PC-3 (cell line): ENCODE measurements at regions of chr6 and their contacts with region 1.

Region 1: GRCh38 chr6:42482174-42482573 is 30.4 kb upstream of the TRERF1 start:
- DNase-seq: no peak
- ATAC-seq: no peak
- H3K4me3 ChIP-seq: no peak overlapping the region
- H3K27ac ChIP-seq: no peak overlapping the region
- H3K4me1 ChIP-seq: no peaks in the 10 kb centered on the region
- H3K27me3 ChIP-seq: no peaks in the 10 kb centered on the region
- CTCF ChIP-seq: no peak

Region 2: GRCh38 chr6:42520786-42521607 is 38.8 kb after region 1 on chr6:
- CTCF ChIA-PET with region 1: no interaction called
- POLR2A ChIA-PET with region 1: no interaction called
- intact Hi-C with region 1: no loop called
- DNase-seq: peak; percentile 92
- ATAC-seq: peak; percentile 95
- H3K4me3 ChIP-seq: peak overlapping the region; percentile 11; the same call in 1 of the 2 replicates
- H3K27ac ChIP-seq: peak overlapping the region; percentile 96
- H3K4me1 ChIP-seq: peaks cover 23% of the 10 kb centered on the region
- H3K27me3 ChIP-seq: no peaks in the 10 kb centered on the region
- CTCF ChIP-seq: no peak

Region 3: DNA sequence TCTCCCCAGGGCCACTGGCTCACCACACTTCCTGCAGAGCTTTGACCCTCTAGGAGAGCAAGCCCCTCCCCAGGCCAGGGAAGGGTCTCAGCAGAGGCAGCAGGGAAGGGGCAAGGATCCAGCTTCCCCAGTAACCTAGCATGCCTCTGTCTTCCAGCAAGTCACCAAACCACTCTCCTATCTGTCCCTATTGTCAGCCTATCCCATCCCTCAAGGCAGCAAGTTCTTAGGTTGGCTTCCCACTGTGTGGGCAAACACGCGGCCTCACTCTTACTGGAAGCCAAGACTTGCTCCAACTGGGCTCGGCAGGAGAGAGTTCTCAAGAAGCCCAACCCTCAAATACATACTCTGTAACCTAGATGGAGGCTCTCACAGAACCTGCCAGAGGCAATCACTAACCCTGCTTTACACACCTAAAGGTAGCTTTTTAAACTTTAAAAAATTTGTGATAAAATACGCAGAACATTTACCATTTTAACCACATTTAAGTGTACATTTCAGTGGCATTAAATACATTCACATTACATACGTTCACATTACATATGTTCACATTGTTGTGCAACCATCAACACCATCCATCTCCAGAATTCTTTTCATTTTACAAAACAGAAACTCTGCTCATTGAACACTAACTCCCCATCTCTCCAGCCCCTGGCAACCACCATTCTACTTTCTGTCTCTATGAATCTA is 1586.6 kb after region 1 on chr6:
- CTCF ChIA-PET with region 1: no interaction called
- POLR2A ChIA-PET with region 1: interaction called, 20 read pairs
- intact Hi-C with region 1: no loop called
- DNase-seq: no peak
- ATAC-seq: no peak
- H3K4me3 ChIP-seq: no peak overlapping the region
- H3K27ac ChIP-seq: no peak overlapping the region
- H3K4me1 ChIP-seq: peaks cover 45% of the 10 kb centered on the region
- H3K27me3 ChIP-seq: no peaks in the 10 kb centered on the region
- CTCF ChIP-seq: no peak